IMR-90 (cell line): ENCODE measurements at regions of chr7 and their contacts with region 1.

Region 1: DNA sequence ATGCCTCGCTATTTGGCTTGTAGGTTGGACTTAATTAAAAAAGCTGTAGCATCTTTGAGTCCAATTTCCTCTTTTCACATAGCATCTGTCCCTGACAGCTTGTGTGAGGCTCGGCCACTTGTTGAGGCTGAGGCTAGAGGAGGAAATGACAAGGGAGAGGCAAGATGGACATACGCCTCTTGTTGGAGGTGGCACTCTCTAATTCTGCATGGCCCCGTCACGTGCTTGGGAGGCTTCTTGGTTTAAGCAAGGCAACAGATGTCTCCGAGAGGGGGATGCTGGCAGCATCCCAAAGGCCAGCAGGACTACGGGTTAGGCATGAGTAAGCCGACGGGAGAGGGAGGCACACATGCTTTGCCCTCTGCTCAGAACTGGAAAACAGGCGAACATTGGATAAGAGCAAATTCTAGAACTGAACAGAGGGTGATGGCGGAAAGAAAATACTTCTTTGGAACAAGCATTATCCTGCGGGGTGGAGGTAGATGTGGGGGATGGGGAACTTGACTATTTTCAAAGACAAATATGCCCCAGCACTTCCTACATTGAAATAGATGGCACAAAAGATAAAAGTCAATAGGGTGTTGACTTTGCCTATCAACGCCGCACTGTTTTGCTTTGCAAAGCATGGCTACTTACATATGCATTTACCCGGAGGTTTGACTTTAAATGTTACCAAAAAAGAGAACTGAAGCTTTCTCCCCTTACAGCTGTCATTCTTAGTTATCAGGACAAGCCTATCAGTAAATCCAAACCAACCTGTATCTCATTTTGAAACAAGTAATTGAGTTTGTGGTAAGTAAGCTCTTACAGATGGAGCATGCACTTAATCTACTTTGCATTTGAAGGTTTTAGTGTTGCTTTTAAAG is 94.8 kb downstream of the CHN2 start:
- DNase-seq: no peak
- ATAC-seq: no peak
- H3K4me3 ChIP-seq: no peak overlapping the region
- H3K27ac ChIP-seq: no peak overlapping the region
- H3K4me1 ChIP-seq: no peaks in the 10 kb centered on the region
- H3K27me3 ChIP-seq: no peaks in the 10 kb centered on the region
- CTCF ChIP-seq: no peak
- POLR2A ChIP-seq: no peak
- RAD21 ChIP-seq: no peak

Region 2: DNA sequence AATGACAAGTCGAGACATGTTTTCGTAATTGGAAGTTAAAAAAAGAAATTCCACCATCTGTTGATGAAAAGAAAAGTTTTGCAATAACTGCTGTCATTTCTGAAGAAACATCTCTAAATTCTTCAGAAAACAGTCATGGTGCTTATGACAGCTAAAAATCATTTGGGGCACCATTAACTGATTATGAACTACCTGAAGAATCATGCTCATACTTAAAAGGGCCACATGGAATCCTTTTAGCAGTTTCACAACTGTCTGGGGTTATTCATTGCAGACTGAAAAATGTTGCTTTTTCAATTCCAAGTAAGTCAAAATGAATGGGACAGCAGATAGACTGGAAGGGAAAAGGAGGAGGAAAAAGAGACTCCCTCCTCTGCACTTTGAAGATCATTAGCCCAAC is 39.4 kb after region 1 on chr7:
- CTCF ChIA-PET with region 1: no interaction called
- POLR2A ChIA-PET with region 1: no interaction called
- dilution Hi-C with region 1: no loop called
- in situ Hi-C with region 1: no loop called
- intact Hi-C with region 1: loop called (anchors 1 kb)
- DNase-seq: no peak
- ATAC-seq: no peak
- H3K4me3 ChIP-seq: no peak overlapping the region
- H3K27ac ChIP-seq: no peak overlapping the region
- H3K4me1 ChIP-seq: no peaks in the 10 kb centered on the region
- H3K27me3 ChIP-seq: no peaks in the 10 kb centered on the region; the same call in 1 of the 2 replicates
- CTCF ChIP-seq: no peak
- POLR2A ChIP-seq: no peak
- RAD21 ChIP-seq: no peak

Region 3: GRCh38 chr7:29342761-29343160 is 53.4 kb after region 1 on chr7:
- CTCF ChIA-PET with region 1: no interaction called
- POLR2A ChIA-PET with region 1: no interaction called
- dilution Hi-C with region 1: no loop called
- in situ Hi-C with region 1: no loop called
- intact Hi-C with region 1: no loop called
- DNase-seq: no peak
- ATAC-seq: no peak
- H3K4me3 ChIP-seq: no peak overlapping the region
- H3K27ac ChIP-seq: no peak overlapping the region
- H3K4me1 ChIP-seq: no peaks in the 10 kb centered on the region
- H3K27me3 ChIP-seq: no peaks in the 10 kb centered on the region
- CTCF ChIP-seq: no peak
- POLR2A ChIP-seq: no peak
- RAD21 ChIP-seq: no peak